ENCODE measurements at regions of chr7 and their contacts with region 1.

Region 1: DNA sequence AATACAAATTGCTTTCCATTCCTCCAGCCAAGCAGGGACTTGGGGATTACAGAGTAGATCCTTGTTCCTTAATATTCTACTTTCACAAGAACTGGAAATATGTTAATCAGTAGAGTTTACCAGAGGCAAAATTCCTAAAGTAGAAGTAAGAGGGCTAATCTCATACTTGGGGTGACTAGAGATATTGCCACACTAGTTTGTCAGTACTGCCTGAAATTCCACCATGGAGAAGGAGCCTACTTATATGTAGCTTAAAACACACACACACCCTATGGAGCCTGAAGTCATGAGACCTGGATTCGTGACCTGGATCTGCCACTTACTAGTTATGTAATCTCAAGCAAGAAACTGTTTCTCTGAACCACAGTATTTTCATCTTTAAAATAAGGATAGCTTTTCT is 33.9 kb downstream of the STRIP2 start:
- DNase-seq: no peak
- ATAC-seq: no peak
- H3K4me3 ChIP-seq: no peak overlapping the region
- H3K27ac ChIP-seq: no peak overlapping the region
- H3K4me1 ChIP-seq: peaks cover 0 to 8% (median 0%) of the 10 kb centered on the region in 9 donors
- H3K27me3 ChIP-seq: no peaks in the 10 kb centered on the region
- CTCF ChIP-seq: no peak

Region 2: GRCh38 chr7:129218514-129219062 is 249.5 kb before region 1 on chr7:
- intact Hi-C with region 1: loop called (anchors 2 to 10 kb)
- DNase-seq: peak; percentile 73 to 86
- ATAC-seq: peak; percentile 81 to 95 (median 90)
- H3K4me3 ChIP-seq: no peak overlapping the region
- H3K27ac ChIP-seq: no peak overlapping the region
- H3K4me1 ChIP-seq: peaks cover 0 to 13% (median 0%) of the 10 kb centered on the region in 9 donors
- H3K27me3 ChIP-seq: no peaks in the 10 kb centered on the region
- CTCF ChIP-seq: peak; percentile 85 to 96 (median 89)

Region 3: GRCh38 chr7:129224251-129225205 is 243.6 kb before region 1 on chr7 and contains the start of gene AHCYL2:
- intact Hi-C with region 1: loop called (anchors 2 to 10 kb)
- DNase-seq: peak; percentile 98 to 99
- ATAC-seq: peak; percentile 99 to 100 (median 99)
- H3K4me3 ChIP-seq: peak within 1 kb of the TSS; percentile 66 to 97 (median 82)
- H3K27ac ChIP-seq: peak within 1 kb of the TSS; percentile 83 to 98 (median 92)
- H3K4me1 ChIP-seq: peaks cover 0 to 30% (median 15%) of the 10 kb centered on the region in 9 donors
- H3K27me3 ChIP-seq: no peaks in the 10 kb centered on the region
- CTCF ChIP-seq: no peak
- total RNA-seq, gene AHCYL2: 4.6 to 7.7 (median 5.7) TPM

Region 4: DNA sequence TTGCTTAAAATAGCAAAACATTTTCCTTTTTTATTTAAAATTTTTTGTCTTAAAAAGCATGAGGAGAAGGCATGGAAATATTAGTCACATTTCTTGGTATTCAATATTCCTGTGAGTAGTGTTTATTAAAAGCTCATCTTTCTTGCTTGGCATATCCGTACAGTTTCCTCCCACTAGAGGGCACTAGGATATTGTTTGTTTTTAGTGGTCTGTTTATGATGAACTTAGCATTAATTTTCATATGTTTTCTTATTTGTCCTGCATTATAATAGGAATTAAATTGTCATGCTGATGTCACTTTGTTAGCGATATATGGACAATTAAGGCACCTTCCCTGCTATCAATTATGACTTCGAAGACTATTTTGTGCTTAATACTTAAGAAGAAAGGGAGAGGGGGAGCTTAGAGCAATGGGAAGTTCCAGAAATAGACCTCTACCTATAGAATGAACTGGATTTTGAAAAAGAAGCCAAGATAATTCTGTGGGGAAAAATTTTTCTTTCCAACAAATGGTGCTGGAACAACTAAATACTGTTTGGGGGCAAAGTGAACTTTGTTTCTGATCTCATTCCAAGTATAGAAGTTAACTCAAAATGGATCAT is 124.9 kb before region 1 on chr7:
- intact Hi-C with region 1: loop called in 2 of 10 experiments (anchors 2 to 5 kb)
- DNase-seq: peak in 1 of 2 donors; percentile 8
- ATAC-seq: peak in 2 of 8 donors; percentile 51
- H3K4me3 ChIP-seq: no peak overlapping the region
- H3K27ac ChIP-seq: no peak overlapping the region
- H3K4me1 ChIP-seq: no peaks in the 10 kb centered on the region
- H3K27me3 ChIP-seq: no peaks in the 10 kb centered on the region
- CTCF ChIP-seq: peak; percentile 39 to 81 (median 73)

Region 5: DNA sequence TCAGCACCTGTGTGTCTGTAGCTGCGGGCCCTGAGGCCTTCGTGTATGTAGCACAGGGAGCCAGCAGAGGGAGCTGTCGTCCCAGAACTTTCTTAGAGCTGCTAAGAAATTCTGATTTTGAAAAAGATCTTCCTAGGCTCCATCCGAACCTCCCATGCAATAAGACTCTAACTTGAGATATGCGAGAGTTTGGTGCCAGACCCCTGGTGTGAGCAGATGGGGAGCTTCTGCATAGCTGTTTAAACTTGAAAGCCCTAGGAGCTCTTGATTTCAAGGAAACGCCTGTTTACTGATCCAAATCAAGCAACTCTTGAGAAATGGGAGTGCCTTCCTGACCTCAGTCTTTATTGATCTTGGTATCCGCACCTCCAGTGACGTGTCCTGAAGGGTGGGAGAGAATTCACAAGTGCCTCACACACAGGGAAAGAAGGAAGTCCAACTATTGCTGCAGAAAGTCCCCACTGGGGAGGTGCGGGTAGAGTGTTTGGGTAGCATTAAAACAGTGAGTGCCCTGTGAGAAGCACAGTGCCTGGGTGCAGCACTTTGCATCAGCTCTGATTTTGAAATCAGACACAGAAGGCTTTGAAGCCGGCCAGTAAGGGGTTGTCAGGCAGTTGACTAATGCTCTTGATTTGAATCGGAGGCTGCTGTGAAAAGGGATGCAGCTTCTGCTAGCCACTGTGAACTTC is 100.2 kb before region 1 on chr7:
- intact Hi-C with region 1: loop called (anchors 1 to 5 kb)
- DNase-seq: peak; percentile 63
- ATAC-seq: peak; percentile 79 to 92 (median 87)
- H3K4me3 ChIP-seq: peak overlapping the region in 4 of 10 donors; percentile 3 to 29 (median 11)
- H3K27ac ChIP-seq: no peak overlapping the region
- H3K4me1 ChIP-seq: peaks cover 0 to 18% (median 11%) of the 10 kb centered on the region in 9 donors
- H3K27me3 ChIP-seq: no peaks in the 10 kb centered on the region
- CTCF ChIP-seq: peak; percentile 71 to 96 (median 89)

Region 6: DNA sequence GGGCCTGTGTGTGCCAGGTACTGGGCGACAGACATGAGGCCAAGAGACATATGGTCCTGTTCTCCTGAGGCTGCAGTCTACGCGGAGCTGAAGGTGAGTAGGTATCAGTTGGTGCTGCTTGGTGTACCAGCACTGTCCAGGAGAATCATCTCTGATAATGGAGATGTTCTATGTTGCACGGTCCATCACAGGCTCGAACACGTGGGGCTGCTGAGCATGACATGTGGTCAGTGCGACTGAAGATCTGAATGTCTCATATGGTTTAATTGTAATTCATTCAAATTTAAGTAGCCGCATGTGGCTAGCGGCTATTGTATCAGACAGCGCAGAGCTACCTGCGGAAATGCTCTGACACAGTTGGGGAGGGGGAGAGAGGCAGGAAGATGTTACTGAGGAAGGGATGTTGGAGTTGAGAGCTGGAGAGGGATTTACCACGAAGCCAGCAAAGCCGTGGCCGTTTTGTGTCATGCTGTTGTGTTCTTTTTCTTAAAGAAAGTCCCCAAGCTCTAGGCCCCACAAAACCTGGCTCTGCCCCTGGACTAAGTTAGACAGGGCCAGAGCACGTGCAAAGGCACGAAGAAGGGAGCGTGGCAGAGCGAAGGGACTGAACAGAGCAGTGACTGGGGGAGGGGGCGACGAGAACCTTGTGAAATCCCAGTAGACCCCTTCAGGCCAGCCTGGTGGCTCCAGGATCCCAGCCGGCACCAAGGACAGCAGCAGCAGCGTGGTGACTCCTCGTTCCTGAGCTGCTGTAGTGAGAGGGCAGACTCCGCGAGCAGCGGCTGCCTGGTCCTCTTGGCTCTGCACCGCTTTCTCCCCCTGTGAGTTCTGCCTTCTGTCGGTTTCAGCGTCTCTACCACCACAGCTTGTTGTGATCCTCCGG is 54.2 kb after region 1 on chr7:
- intact Hi-C with region 1: no loop called
- DNase-seq: no peak
- ATAC-seq: no peak
- H3K4me3 ChIP-seq: no peak overlapping the region
- H3K27ac ChIP-seq: no peak overlapping the region
- H3K4me1 ChIP-seq: peaks cover 0 to 3% (median 0%) of the 10 kb centered on the region in 9 donors
- H3K27me3 ChIP-seq: peaks cover 0 to 55% (median 14%) of the 10 kb centered on the region in 7 donors
- CTCF ChIP-seq: no peak

Region 7: DNA sequence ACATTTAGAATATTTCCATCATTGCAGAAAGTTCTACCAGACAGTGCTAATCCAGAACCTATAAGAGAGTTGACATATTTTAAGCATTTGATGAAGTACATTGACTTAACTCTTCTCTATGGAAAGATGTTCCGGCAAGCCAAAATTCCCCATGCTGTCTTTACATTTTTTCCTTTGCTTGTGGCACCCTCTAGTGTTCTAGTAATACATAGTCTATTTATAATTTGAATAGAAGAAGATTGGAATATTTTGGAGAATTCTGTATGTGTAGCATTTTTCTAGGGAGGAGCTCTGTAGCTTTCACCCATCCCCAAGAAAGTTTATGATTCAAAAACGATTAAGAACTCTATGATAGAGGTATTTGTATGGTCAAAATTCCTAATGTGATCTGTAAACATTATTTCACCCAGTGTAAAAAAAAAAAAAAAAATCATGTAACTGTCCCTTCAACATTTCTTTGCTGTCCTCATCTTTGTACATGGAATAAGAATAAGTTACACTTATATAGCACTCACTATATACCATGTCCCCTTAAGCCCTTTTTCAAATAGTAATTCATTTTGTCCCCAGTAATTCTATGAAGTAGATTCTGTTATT is 176.6 kb after region 1 on chr7:
- intact Hi-C with region 1: loop called in 1 of 10 experiments (anchors 10 kb)
- DNase-seq: no peak
- ATAC-seq: peak in 3 of 8 donors; percentile 41 to 52 (median 44)
- H3K4me3 ChIP-seq: no peak overlapping the region
- H3K27ac ChIP-seq: no peak overlapping the region
- H3K4me1 ChIP-seq: peaks cover 0 to 32% (median 17%) of the 10 kb centered on the region in 9 donors
- H3K27me3 ChIP-seq: no peaks in the 10 kb centered on the region
- CTCF ChIP-seq: peak in 8 of 9 donors; percentile 11 to 67 (median 57)